ENCODE measurements at regions of chr12 and their contacts with region 1.

Region 1: GRCh38 chr12:76031537-76032073 is at the start of gene PHLDA1:
- DNase-seq: peak; percentile 97
- H3K4me3 Mint-ChIP-seq: peak within 1 kb of the TSS; percentile 96
- H3K27ac Mint-ChIP-seq: peak within 1 kb of the TSS; percentile 94
- H3K4me1 Mint-ChIP-seq: peaks cover 34% of the 10 kb centered on the region
- H3K27me3 Mint-ChIP-seq: no peaks in the 10 kb centered on the region
- total RNA-seq, gene PHLDA1: 23.8 to 24.4 TPM

Region 2: DNA sequence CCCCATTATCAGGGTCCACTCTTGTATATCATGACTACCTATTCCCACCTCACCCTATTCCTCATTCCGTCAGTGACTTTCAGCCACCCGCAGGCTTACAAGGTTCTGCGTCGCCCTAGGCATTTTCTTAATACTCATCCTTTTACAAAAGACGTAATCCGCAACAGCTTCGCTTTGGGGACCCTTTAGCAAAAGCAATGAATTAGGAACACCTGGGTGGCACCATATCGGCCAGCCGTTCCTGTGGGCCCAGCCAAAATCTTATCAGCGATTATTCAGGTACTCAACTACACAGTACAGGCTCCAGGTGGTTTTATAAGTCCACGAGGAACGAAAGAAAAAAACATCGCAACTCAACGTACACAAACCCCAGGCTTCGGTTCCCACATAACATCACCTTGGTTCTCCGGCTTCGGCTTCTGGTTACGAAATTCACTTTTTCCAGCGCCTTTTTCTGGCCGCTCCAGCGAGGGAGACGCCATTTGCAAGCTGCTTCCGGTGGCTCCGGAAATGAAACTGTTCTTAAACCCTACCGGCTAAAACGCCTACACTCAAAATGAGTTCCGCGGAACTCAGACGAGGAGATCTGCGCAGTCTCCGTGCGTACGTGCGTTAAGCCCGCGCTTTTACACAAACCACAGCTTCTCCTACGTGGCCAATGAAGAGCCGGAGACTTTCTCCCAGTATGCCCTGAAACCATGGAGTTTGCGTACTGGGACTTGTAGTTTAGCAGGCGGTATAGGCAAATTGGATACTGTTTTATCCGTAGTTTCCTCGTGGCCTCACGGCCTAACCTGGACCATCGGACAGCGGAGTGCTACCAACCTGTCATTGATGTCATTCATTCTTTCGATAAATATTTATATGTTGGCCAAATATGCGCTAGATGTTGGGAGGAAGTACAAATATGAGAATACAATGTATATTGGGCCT is 520.2 kb before region 1 on chr12 and contains the start of gene KRR1:
- CTCF ChIA-PET with region 1: interaction called, 8 read pairs
- POLR2A ChIA-PET with region 1: interaction called, 15 read pairs
- intact Hi-C with region 1: loop called (anchors 1 kb)
- DNase-seq: peak; percentile 95
- H3K4me3 Mint-ChIP-seq: peak within 1 kb of the TSS; percentile 99
- H3K27ac Mint-ChIP-seq: peak within 1 kb of the TSS; percentile 98
- H3K4me1 Mint-ChIP-seq: peaks cover 31% of the 10 kb centered on the region
- H3K27me3 Mint-ChIP-seq: no peaks in the 10 kb centered on the region
- total RNA-seq, gene KRR1: 96.6 to 106 TPM

Region 3: DNA sequence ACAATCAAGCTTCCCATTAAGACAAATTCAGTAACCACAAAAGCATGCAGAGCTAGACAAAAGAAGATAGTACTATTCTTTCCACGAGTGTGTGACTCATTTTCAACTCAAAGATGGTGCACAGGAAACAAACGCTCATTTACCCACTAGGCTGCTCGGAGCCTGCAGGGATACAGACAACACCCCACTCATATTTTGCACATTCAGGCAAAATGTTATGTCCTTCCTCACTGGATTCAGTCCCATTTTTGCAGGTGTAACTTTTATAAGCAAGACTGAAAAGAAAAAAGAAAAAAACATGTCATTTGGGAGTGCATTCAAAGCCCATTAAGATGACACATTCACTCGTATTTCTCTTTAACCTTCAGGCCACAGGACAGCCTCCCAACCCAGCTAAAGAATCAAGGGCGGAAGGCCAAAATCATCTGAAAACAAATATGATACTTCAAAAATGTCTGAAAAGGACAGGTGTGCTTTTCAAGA is 372.7 kb before region 1 on chr12:
- CTCF ChIA-PET with region 1: no interaction called
- POLR2A ChIA-PET with region 1: interaction called, 3 read pairs
- intact Hi-C with region 1: loop called (anchors 5 kb)
- DNase-seq: peak; percentile 27
- H3K4me3 Mint-ChIP-seq: no peak overlapping the region
- H3K27ac Mint-ChIP-seq: no peak overlapping the region
- H3K4me1 Mint-ChIP-seq: peaks cover 14% of the 10 kb centered on the region
- H3K27me3 Mint-ChIP-seq: peaks cover under 1% of the 10 kb centered on the region

Region 4: DNA sequence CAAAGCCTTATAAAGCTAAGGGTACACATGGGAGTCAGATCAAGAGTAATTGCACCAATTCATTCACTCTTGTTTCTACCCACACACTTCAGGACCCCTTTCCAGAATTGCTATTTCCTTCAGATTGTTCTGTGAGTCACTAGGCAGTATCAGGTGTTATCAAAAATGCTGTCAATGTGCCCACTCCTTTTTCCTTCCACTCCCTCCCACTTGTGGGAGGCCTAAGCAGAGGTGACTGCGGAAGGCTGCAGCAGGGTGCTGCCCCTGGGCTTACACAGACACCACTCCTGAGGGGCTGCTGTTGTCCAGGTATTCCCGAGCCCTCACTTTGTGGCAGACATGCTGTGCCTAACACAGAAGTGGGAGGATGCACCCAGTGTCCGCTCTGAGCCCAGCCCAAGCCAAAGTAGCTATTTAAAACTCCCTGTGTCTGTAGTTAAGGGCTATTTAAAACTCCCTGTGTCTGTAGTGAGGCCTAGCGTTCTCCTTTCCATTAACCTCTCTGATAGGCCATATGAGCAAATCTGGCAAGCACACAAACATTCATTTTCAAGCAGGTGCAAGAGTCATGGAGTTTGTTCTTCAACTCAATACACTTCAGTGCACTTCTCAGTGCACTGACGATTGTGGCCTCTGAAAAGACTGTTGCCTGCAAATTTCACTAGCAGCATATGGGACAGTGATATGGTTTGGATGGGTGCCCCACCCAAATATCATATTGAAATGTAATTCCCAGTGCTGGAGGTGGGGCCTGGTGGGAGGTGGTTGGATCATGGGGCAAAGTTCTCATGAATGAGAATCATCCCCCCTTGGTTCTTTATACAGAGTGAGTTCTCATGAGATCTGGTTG is 117.9 kb before region 1 on chr12:
- CTCF ChIA-PET with region 1: interaction called, 4 read pairs
- POLR2A ChIA-PET with region 1: no interaction called
- intact Hi-C with region 1: loop called (anchors 1 kb)
- DNase-seq: peak; percentile 73
- H3K4me3 Mint-ChIP-seq: no peak overlapping the region
- H3K27ac Mint-ChIP-seq: peak overlapping the region; percentile 9
- H3K4me1 Mint-ChIP-seq: peaks cover 28% of the 10 kb centered on the region
- H3K27me3 Mint-ChIP-seq: no peaks in the 10 kb centered on the region

Region 5: GRCh38 chr12:75977952-75978671 is 53.5 kb before region 1 on chr12:
- CTCF ChIA-PET with region 1: interaction called, 7 read pairs
- POLR2A ChIA-PET with region 1: interaction called, 46 read pairs
- intact Hi-C with region 1: loop called (anchors 1 kb)
- DNase-seq: peak; percentile 88
- H3K4me3 Mint-ChIP-seq: peak overlapping the region; percentile 34
- H3K27ac Mint-ChIP-seq: peak overlapping the region; percentile 97
- H3K4me1 Mint-ChIP-seq: peaks cover 63% of the 10 kb centered on the region
- H3K27me3 Mint-ChIP-seq: no peaks in the 10 kb centered on the region

Region 6: GRCh38 chr12:76002598-76003354 is 28.8 kb before region 1 on chr12:
- CTCF ChIA-PET with region 1: no interaction called
- POLR2A ChIA-PET with region 1: no interaction called
- intact Hi-C with region 1: no loop called
- DNase-seq: no peak
- H3K4me3 Mint-ChIP-seq: no peak overlapping the region
- H3K27ac Mint-ChIP-seq: no peak overlapping the region
- H3K4me1 Mint-ChIP-seq: peaks cover 3% of the 10 kb centered on the region
- H3K27me3 Mint-ChIP-seq: peaks cover 3% of the 10 kb centered on the region

Region 7: DNA sequence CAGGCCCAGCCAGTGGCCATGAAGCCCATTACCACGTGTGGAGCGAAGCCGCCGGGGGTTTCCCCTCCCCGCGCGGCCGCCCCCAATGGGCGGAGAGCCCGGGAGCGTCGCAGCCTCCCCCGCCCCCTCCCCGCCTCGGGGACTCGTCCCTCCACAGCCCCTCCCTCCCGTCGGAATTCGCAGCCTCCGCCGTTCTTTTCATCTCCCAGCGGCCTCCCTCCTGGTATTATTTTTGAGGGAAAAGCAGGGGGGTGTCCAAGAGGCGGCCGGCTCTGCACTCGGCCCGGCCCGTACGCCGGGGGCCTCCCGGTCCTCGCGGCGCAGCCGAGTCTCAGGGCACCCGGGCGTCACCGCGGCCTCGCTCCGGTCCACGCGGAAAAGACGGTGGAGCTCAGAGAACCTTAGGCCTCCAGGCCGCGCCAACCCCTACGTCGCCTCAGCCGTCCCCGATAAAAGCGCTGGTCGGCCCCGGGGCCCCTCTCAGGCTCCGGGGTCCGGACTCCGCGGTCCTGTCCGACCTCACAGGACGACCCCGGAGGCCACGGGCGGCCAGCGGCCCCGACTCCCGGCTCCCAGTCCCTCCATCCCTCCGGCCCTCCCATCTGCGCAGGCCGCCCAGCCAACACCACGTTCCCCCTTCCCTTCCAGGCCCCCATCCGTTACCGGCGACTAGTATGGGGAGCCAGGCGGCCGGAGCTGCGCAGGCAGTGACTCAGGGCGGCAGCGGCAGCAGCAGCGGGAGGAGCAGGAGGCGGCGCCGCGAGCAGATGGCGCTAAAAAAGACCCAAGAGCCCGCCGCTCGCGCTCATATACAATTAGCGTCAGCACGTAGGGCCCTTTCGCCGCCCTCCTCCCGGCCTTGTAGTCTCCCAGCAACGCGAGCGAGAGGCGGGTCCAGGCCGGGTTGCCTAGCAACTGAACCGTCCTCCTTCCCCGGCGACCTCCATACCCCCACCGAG is 52.6 kb after region 1 on chr12 and contains the start of gene NAP1L1:
- CTCF ChIA-PET with region 1: no interaction called
- POLR2A ChIA-PET with region 1: interaction called, 12 read pairs
- intact Hi-C with region 1: loop called (anchors 1 kb)
- DNase-seq: peak; percentile 98
- H3K4me3 Mint-ChIP-seq: peak within 1 kb of the TSS; percentile 93
- H3K27ac Mint-ChIP-seq: peak within 1 kb of the TSS; percentile 99
- H3K4me1 Mint-ChIP-seq: peaks cover 42% of the 10 kb centered on the region
- H3K27me3 Mint-ChIP-seq: no peaks in the 10 kb centered on the region
- total RNA-seq, gene NAP1L1: 889 to 895 TPM